ENCODE measurements at regions of chr22 and their contacts with region 1.

Region 1: GRCh38 chr22:49838771-49839717 is 11.4 kb upstream of the BRD1 start:
- DNase-seq: peak; percentile 93
- H3K4me3 Mint-ChIP-seq: peak overlapping the region; percentile 65
- H3K27ac Mint-ChIP-seq: peak overlapping the region; percentile 94
- H3K4me1 Mint-ChIP-seq: peaks cover 36% of the 10 kb centered on the region
- H3K27me3 Mint-ChIP-seq: no peaks in the 10 kb centered on the region

Region 2: DNA sequence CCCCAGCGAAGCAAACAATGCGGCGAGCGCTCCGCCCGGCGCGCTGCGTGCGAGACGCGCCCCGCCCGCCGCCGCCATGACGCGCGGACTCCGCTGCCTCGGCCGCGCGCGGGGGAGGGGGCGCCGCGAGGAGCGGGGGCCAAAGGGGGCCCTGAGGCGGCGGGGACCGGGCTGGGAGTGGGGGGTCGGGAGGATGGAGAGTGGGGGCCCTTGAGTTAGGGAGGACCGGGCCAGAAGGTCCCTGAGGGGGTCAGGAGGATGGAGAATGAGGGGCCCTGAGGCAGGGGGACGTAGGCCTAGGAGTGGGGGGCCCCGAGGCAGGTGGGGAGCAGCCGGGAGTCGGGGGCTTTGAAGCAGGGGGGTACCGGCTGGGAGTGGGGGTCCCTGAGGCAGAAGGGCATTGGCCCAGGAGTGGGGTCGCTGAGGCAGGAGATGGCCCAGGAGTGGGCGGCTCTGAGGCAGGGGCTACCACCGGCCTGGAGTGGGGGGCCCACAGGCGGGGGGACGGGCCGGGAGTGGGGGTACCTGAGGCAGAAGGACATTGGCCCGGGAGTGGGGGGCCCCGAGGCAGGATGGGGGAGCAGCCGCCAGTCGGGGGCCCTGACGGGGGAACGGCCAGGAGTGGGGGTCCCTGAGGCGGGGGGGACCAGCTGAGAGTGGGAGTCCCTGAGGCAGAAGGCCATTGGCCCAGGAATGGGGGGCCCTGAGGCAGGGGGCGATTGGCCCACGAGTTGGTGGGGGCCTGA is 11.0 kb before region 1 on chr22 and contains the start of gene BRD1:
- CTCF ChIA-PET with region 1: no interaction called
- POLR2A ChIA-PET with region 1: interaction called, 7 read pairs
- intact Hi-C with region 1: loop called (anchors 1 kb)
- DNase-seq: peak; percentile 53
- H3K4me3 Mint-ChIP-seq: peak within 1 kb of the TSS; percentile 90
- H3K27ac Mint-ChIP-seq: peak within 1 kb of the TSS; percentile 92
- H3K4me1 Mint-ChIP-seq: peaks cover 52% of the 10 kb centered on the region
- H3K27me3 Mint-ChIP-seq: no peaks in the 10 kb centered on the region
- total RNA-seq, gene BRD1: 27.5 to 30.2 TPM

Region 3: DNA sequence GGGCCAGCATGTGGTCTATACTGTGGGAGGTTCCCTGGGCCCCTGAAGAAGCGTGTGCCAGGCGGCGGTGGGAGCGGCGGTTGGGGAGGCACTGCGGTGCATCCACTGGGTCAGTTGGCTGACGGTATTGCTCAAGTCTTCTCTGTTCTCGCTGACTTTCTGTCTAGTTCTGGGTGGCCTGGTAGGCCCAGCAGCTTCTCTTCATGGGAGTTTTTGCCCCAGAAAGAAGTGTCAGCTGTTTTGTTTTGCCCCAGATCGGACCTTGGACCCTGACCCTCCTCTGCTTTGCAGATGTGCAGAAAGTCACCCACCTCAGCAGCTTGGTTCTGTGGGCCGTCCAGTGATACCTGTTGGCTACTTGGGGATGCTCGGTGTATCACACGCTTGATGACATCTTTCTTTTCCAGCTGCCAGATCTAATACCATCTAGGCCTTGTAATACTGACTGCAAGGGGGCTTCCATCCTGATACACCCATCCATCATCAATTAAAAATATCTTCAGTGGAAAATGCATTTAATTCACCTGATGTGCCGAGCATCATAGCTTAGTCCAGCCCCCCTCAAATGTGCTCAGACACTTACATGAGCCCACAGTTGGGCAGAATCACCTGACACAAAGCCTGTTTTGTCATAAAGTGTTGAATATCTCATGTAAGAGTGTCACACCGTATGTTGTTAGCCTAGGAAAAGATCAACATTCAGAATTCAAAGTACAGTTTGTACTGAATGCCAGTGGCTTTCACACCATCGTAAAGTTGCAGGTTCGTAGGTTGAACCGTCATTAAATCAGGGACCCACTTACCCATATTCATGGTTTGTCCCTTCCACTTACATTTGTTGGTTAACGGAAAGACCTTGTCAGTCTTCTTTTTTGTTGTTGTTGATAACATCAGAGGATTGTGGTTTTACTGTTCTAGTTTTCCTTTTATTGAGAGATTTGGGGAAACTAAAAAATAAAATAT is 28.5 kb after region 1 on chr22:
- CTCF ChIA-PET with region 1: no interaction called
- POLR2A ChIA-PET with region 1: interaction called, 5 read pairs
- intact Hi-C with region 1: loop called (anchors 1 kb)
- DNase-seq: peak; percentile 8
- H3K4me3 Mint-ChIP-seq: no peak overlapping the region
- H3K27ac Mint-ChIP-seq: peak overlapping the region; percentile 54
- H3K4me1 Mint-ChIP-seq: peaks cover 67% of the 10 kb centered on the region
- H3K27me3 Mint-ChIP-seq: no peaks in the 10 kb centered on the region

Region 4: DNA sequence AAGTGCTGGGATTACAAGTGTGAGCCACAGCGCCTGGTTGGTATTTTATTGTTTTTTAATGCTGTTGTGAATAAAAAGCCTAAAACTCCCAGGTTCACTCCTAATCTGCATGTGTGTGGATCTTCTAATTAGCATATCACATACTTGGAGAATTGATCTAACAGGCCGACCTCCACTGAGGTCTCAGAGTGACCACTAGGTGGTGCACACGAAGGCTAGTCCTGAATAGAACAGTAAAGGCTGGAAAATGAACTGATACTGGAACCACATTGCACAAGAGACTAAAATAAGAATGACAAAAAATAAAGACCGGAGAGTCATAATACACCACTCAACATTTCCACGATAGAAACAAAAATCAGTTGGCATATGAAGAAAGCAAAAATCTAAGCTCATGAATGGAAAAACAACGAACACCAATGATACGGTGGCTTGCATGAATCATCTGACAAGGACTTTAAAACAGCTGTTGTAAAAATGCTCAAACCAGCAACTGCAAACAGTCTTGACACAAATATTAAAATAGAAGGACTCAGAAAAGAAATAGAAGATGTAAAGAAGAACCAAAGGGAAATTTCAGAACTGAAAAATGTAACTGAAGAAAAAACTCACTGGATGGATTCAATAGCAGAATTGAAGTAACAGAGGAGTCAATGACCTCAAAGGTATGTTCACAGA is 140.7 kb after region 1 on chr22:
- CTCF ChIA-PET with region 1: no interaction called
- POLR2A ChIA-PET with region 1: no interaction called
- intact Hi-C with region 1: loop called (anchors 2 kb)
- DNase-seq: peak; percentile 68
- H3K4me3 Mint-ChIP-seq: peak overlapping the region; percentile 42
- H3K27ac Mint-ChIP-seq: peak overlapping the region; percentile 83
- H3K4me1 Mint-ChIP-seq: peaks cover 44% of the 10 kb centered on the region
- H3K27me3 Mint-ChIP-seq: peaks cover 4% of the 10 kb centered on the region

Region 5: GRCh38 chr22:50339945-50340879 is 501.2 kb after region 1 on chr22:
- CTCF ChIA-PET with region 1: no interaction called
- POLR2A ChIA-PET with region 1: no interaction called
- intact Hi-C with region 1: no loop called
- DNase-seq: peak; percentile 31
- H3K4me3 Mint-ChIP-seq: no peak overlapping the region
- H3K27ac Mint-ChIP-seq: no peak overlapping the region
- H3K4me1 Mint-ChIP-seq: peaks cover 10% of the 10 kb centered on the region
- H3K27me3 Mint-ChIP-seq: no peaks in the 10 kb centered on the region

Measured in activated CD4-positive, alpha-beta memory T cell treated with anti-CD3 and anti-CD28 coated beads for 36 hours (primary cell).